Ascending aorta (tissue), 2 donors: ENCODE measurements at regions of chr7 and their contacts with region 1.

Region 1: DNA sequence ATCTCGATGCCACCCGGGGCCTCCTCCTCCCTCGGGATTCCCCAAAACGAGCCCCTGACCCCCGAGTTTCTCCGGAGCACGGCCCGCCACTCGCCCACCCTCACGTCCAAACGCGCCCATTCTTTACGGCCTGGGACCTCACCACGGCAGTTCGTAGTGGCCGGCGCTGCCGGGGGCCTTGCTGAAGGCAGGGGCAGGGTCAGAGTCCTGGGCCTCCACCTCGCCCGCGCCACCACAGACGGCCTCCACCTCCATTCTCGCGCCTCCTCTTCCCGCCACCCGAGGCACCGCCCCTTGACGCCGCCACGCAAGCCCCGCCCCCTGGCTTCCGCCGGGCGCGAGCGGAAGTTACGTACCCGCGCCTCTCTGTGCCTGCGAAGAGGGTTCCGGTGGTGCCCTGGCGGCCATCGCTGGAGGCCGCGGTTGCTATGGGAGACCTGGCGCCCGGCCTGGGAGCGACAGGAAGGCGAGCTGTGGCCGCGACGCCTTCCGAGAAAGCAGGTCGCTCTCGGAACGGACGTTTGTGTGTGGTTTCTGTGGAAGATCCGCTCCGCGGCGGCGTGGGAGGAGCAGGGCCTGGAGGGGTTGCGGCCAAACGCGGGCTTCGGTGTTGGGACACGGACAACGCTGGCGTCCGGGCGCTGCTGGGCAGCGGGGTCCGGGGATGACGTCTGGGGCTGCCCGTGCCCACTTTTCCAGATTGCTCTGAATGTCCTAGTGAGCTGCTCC is at the start of gene RFC2:
- DNase-seq: peak; percentile 88 to 98
- H3K4me3 ChIP-seq: peak within 1 kb of the TSS; percentile 77 to 90
- H3K27ac ChIP-seq: peak within 1 kb of the TSS; percentile 91 to 95
- H3K4me1 ChIP-seq: peaks cover 4 to 25% of the 10 kb centered on the region in 2 donors
- H3K27me3 ChIP-seq: no peaks in the 10 kb centered on the region
- CTCF ChIP-seq: peak in 1 of 3 experiments; percentile 65
- total RNA-seq, gene RFC2: 37.7 TPM

Region 2: GRCh38 chr7:74272305-74273038 is 18.2 kb after region 1 on chr7:
- intact Hi-C with region 1: loop called (anchors 2 kb)
- DNase-seq: peak; percentile 63 to 87
- H3K4me3 ChIP-seq: no peak overlapping the region
- H3K27ac ChIP-seq: peak overlapping the region; percentile 83 to 88
- H3K4me1 ChIP-seq: peaks cover 0 to 8% of the 10 kb centered on the region in 2 donors
- H3K27me3 ChIP-seq: no peaks in the 10 kb centered on the region
- CTCF ChIP-seq: no peak

Region 3: DNA sequence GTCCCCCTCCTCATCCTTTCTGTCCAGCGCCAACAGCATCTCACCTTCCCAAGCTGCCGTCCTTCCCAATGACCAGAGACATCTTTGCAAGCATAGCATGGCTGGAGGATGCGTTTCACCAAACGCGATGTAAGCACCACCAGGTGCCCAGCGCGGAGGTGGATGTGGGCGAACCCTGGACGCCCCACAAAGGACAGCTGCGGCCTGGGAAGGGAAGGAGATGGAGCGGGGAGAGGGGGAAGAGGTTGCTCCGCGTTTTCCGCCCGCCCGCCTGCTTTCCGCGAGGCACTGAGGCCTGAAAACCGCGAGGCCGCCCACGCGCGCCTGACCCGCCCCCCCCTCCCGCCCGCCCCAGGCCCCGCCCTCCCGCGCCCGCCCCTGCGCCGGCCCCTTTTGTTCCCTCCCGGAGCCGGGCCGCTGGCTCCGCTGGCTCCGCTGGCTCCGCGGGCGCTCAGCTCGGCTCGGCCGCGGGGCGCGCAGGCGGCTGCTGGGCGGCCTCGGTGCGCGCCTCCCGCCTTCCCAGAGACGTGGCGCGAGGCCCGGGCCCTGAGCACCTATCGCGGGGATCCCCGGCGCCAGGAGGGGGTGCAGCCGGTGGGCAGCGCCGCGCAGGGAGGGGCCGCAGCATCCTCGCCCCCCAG is 34.8 kb after region 1 on chr7 and contains the start of gene CLIP2:
- intact Hi-C with region 1: loop called (anchors 1 kb)
- DNase-seq: peak in 1 of 2 donors; percentile 87
- H3K4me3 ChIP-seq: peak within 1 kb of the TSS; percentile 95 to 99
- H3K27ac ChIP-seq: peak within 1 kb of the TSS; percentile 82 to 93
- H3K4me1 ChIP-seq: peaks cover 12 to 23% of the 10 kb centered on the region in 2 donors
- H3K27me3 ChIP-seq: no peaks in the 10 kb centered on the region
- CTCF ChIP-seq: peak in 1 of 3 experiments; percentile 21
- total RNA-seq, gene CLIP2: 50.2 TPM

Region 4: GRCh38 chr7:74343281-74344127 is 89.2 kb after region 1 on chr7:
- intact Hi-C with region 1: no loop called
- DNase-seq: no peak
- H3K4me3 ChIP-seq: no peak overlapping the region
- H3K27ac ChIP-seq: no peak overlapping the region
- H3K4me1 ChIP-seq: no peaks in the 10 kb centered on the region
- H3K27me3 ChIP-seq: no peaks in the 10 kb centered on the region
- CTCF ChIP-seq: no peak

Region 5: GRCh38 chr7:74479961-74480829 is 225.9 kb after region 1 on chr7:
- intact Hi-C with region 1: loop called (anchors 5 kb)
- DNase-seq: peak; percentile 59 to 94
- H3K4me3 ChIP-seq: peak overlapping the region; percentile 45 to 57
- H3K27ac ChIP-seq: peak overlapping the region; percentile 90 to 95
- H3K4me1 ChIP-seq: peaks cover 25 to 44% of the 10 kb centered on the region in 2 donors
- H3K27me3 ChIP-seq: no peaks in the 10 kb centered on the region
- CTCF ChIP-seq: no peak